ENCODE measurements at regions of chr3 and their contacts with region 1.

Region 1: DNA sequence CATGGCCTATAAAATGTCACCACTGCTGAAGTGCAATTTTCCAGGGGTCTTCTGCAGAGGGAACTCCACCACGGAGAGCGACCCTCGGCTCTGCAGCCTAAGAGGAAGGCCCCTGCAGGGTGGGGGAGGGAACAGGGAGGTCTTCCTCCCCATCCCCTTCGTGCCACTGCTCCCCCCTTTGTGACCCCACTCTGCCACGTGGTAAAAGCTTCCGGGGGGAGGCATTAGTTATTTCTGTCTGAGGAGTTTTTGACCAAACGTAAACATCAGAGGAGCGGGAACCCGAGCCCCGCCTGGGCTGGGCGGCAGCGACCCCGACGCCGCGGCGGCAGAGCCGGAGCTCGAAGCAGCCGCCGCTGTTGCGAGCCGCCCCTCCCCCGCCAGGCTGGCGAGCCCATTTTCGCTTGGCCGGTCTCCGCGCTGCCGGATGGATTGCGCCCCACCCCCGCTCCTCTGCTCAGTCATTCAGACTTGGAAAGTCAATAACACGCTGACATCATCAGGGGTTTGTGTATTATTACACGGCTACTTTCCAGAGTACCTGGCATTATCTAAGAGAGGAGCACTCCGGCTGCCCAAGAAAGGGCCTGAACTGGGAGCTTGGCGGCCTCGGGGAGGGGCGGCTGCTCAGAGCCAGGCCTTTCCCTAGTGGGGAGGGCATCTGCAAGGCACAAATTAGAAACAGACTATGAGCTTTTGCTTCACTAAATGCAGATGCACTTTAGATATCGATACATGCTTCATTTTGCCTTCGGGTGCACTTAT is 162.5 kb upstream of the TBL1XR1 start:
- DNase-seq: peak; percentile 99
- H3K4me3 ChIP-seq: peak overlapping the region; percentile 31
- H3K27ac ChIP-seq: peak overlapping the region; percentile 83
- H3K4me1 ChIP-seq: peaks cover 46% of the 10 kb centered on the region
- H3K27me3 ChIP-seq: no peaks in the 10 kb centered on the region
- CTCF ChIP-seq: 0 out of 2 replicates have a peak, but pooled peaks have one; percentile 15

Region 2: DNA sequence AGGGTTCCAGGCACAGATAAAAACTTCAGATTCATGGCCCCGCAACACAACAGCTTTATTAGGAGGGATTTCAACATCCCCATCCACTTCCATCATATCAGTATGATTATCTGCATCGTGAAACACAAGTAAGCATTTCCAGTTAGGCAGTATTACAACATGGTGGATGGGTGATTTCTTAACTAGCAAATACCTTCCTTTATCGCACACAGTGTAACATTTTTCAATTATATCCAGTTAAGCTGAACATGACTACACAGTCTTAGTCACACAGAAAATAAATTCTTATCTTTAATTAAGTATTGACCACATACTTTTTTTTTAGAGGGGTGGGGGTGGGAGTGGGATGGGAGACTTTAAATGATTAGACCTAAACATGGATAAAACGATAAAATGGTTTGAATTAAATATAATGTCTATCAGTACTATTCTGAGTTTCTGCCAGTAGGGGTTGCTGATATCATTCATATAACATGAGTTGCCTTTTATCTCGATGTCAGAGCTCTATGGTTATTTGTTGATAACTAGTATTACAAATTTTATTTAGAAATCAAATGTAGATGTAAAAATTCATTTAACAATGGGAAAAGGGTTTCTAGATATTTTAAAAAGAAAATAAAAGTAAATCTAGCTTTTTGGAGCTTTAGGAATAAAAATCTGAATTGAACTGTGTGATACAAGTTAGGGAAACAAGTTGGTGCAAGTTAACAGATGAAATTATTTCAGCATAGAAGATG is 309.1 kb before region 1 on chr3:
- CTCF ChIA-PET with region 1: no interaction called
- POLR2A ChIA-PET with region 1: interaction called, 3 read pairs
- intact Hi-C with region 1: loop called (anchors 5 kb)
- DNase-seq: peak; percentile 77
- H3K4me3 ChIP-seq: no peak overlapping the region
- H3K27ac ChIP-seq: peak overlapping the region; percentile 79
- H3K4me1 ChIP-seq: peaks cover 77% of the 10 kb centered on the region
- H3K27me3 ChIP-seq: no peaks in the 10 kb centered on the region
- CTCF ChIP-seq: peak; percentile 72

Region 3: GRCh38 chr3:177197041-177197727 is 162.6 kb before region 1 on chr3 and contains the start of gene TBL1XR1:
- CTCF ChIA-PET with region 1: no interaction called
- POLR2A ChIA-PET with region 1: interaction called, 4 read pairs
- intact Hi-C with region 1: loop called (anchors 1 kb)
- DNase-seq: peak; percentile 96
- H3K4me3 ChIP-seq: peak within 1 kb of the TSS; percentile 79
- H3K27ac ChIP-seq: peak within 1 kb of the TSS; percentile 98
- H3K4me1 ChIP-seq: peaks cover 29% of the 10 kb centered on the region
- H3K27me3 ChIP-seq: no peaks in the 10 kb centered on the region
- CTCF ChIP-seq: no peak
- total RNA-seq, gene TBL1XR1: 186 and 220 TPM in 2 replicates

Region 4: GRCh38 chr3:177569875-177570657 is 210.3 kb after region 1 on chr3:
- CTCF ChIA-PET with region 1: no interaction called
- POLR2A ChIA-PET with region 1: no interaction called
- intact Hi-C with region 1: no loop called
- DNase-seq: peak; percentile 82
- H3K4me3 ChIP-seq: no peak overlapping the region
- H3K27ac ChIP-seq: peak overlapping the region; percentile 34
- H3K4me1 ChIP-seq: peaks cover 25% of the 10 kb centered on the region
- H3K27me3 ChIP-seq: no peaks in the 10 kb centered on the region
- CTCF ChIP-seq: no peak

Region 5: DNA sequence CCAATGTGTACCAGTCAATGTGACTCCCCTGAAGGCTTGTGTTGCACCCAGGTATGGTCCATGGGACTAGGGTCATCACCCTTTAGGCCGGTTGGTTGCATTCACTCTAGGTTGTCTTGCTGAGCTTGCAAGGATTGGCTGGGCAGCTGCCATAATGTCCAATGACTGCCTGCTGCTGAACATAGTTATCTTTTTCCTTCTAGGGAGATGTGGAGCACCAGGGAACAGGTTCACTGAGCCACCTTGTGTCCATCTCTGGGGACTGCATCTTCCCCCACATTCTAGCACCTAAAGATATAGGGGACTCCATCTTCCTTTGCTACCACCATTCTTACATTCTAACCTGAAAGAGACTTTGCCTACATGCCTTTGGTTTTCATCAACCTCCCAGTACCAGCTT is 417.9 kb after region 1 on chr3:
- CTCF ChIA-PET with region 1: interaction called, 5 read pairs
- POLR2A ChIA-PET with region 1: no interaction called
- intact Hi-C with region 1: loop called (anchors 2 kb)
- DNase-seq: peak; percentile 84
- H3K4me3 ChIP-seq: no peak overlapping the region
- H3K27ac ChIP-seq: no peak overlapping the region
- H3K4me1 ChIP-seq: peaks cover 27% of the 10 kb centered on the region
- H3K27me3 ChIP-seq: no peaks in the 10 kb centered on the region
- CTCF ChIP-seq: peak; percentile 81

Region 6: GRCh38 chr3:178325330-178325729 is 965.6 kb after region 1 on chr3:
- CTCF ChIA-PET with region 1: no interaction called
- POLR2A ChIA-PET with region 1: no interaction called
- intact Hi-C with region 1: loop called (anchors 2 kb)
- DNase-seq: peak; percentile 69
- H3K4me3 ChIP-seq: no peak overlapping the region
- H3K27ac ChIP-seq: no peak overlapping the region
- H3K4me1 ChIP-seq: peaks cover 26% of the 10 kb centered on the region
- H3K27me3 ChIP-seq: no peaks in the 10 kb centered on the region
- CTCF ChIP-seq: peak; percentile 65

Measured in A673 (cell line).